Heart right ventricle (tissue), 16 donors: ENCODE measurements at regions of chr5 and their contacts with region 1.

Region 1: GRCh38 chr5:68884883-68885282 is 208.9 kb upstream of the SLC30A5 start:
- DNase-seq: no peak
- ATAC-seq: no peak
- H3K4me3 ChIP-seq: no peak overlapping the region
- H3K27ac ChIP-seq: no peak overlapping the region
- H3K4me1 ChIP-seq: no peaks in the 10 kb centered on the region
- H3K27me3 ChIP-seq: no peaks in the 10 kb centered on the region
- CTCF ChIP-seq: peak in 8 of 9 donors; percentile 7 to 36 (median 28)

Region 2: DNA sequence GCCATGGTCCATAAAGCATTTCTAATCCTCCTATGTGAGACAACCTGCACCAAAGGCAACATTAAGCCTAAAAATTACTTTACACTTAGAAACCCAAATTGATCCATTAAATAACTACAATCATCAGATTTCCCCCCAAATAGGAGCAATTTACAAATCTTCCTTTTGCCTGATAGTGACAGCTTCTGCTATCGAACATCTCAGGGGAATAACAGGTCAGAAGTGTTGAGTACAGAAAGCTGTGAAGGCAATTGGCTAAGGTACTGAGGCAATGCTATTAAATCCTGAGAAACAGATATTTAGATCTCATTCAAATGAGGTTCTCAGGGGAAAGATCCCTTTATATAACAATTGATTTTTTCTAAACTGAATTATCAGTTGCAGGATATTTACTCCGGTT is 528.3 kb before region 1 on chr5:
- intact Hi-C with region 1: loop called in 1 of 10 experiments (anchors 5 kb)
- DNase-seq: no peak
- ATAC-seq: no peak
- H3K4me3 ChIP-seq: no peak overlapping the region
- H3K27ac ChIP-seq: no peak overlapping the region
- H3K4me1 ChIP-seq: peaks cover 0 to 8% (median 0%) of the 10 kb centered on the region in 9 donors
- H3K27me3 ChIP-seq: no peaks in the 10 kb centered on the region
- CTCF ChIP-seq: no peak

Region 3: GRCh38 chr5:69093771-69094482 is 209.0 kb after region 1 on chr5 and contains the start of gene SLC30A5:
- intact Hi-C with region 1: no loop called
- DNase-seq: peak; percentile 99
- ATAC-seq: peak; percentile 100
- H3K4me3 ChIP-seq: peak within 1 kb of the TSS; percentile 68 to 100 (median 83)
- H3K27ac ChIP-seq: peak within 1 kb of the TSS; percentile 86 to 99 (median 96)
- H3K4me1 ChIP-seq: peaks cover 4 to 38% (median 22%) of the 10 kb centered on the region in 9 donors
- H3K27me3 ChIP-seq: no peaks in the 10 kb centered on the region
- CTCF ChIP-seq: peak; percentile 86 to 99 (median 93)
- total RNA-seq, gene SLC30A5: 25.7 to 36.7 (median 32.1) TPM